ENCODE measurements at regions of chr12 and their contacts with region 1.

Region 1: DNA sequence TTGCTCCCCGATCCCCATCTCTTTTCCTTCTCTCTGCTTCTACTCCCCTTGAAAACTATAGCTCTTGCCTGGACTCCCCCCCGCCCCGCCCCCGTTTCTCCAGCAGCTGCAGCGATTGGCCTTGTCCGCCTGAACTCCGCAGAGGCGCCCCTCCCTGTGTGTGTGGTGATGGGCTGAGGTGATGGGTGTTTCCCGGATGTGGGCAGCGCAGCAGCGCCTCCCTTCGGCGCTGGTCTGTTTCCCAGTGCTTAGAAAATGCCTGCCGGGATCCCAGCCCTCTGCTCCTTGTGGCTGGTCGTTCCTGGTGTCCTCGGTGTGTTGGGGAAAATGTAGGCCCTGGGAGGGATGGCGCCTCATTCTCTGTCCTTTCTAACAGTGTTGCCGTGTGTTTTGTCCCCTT is 43.3 kb downstream of the GALNT8 start:
- DNase-seq: no peak
- ATAC-seq: no peak
- H3K4me3 ChIP-seq: no peak overlapping the region
- H3K27ac ChIP-seq: no peak overlapping the region
- H3K4me1 ChIP-seq: peaks cover 0 to 35% (median 5%) of the 10 kb centered on the region in 9 donors
- H3K27me3 ChIP-seq: no peaks in the 10 kb centered on the region
- CTCF ChIP-seq: no peak

Region 2: DNA sequence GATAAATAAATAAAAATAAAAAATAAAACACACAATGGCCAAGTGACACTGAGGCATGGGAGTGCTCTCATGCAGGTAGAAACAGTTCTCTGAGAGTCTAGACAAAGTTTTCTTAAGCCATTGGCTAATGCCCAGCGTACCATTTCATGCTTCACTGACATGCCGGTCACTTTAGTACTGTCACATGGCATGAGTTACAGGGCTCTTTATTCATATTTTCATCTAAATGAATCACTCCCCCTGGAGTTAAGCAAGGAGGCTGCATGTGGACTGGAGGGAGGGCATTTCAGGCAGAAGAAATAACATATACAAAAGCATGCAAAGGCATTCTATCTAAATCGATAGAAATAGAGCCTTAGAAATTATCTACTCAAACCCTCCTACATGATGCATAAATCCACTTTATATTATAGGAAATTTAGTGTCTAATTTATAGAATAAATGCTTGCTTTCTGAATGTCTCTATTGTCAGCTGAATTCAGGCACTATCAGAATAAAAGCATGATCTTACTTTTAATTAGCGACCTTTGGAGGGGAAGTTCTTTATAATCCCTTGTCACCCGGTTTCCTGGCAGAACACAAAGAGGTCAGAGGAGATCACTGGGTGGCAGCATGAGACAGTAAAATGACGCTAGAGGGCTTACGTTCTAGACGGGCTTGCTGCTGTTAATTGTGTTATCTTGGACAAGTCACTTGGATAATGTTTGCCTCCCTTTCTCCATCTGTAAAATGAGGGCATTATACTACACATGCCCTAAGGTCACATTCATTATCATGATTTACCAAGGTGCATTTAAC is 184.0 kb before region 1 on chr12:
- intact Hi-C with region 1: loop called in 4 of 10 experiments (anchors 5 to 10 kb)
- DNase-seq: no peak
- ATAC-seq: peak in 3 of 8 donors; percentile 53 to 58 (median 56)
- H3K4me3 ChIP-seq: no peak overlapping the region
- H3K27ac ChIP-seq: no peak overlapping the region
- H3K4me1 ChIP-seq: peaks cover 0 to 6% (median 0%) of the 10 kb centered on the region in 9 donors
- H3K27me3 ChIP-seq: peaks cover 0 to 24% (median 0%) of the 10 kb centered on the region in 7 donors
- CTCF ChIP-seq: peak in 6 of 9 donors; percentile 7 to 40 (median 29)

Region 3: GRCh38 chr12:4604684-4605193 is 158.8 kb before region 1 on chr12:
- intact Hi-C with region 1: loop called in 4 of 10 experiments (anchors 1 to 10 kb)
- DNase-seq: peak; percentile 72 to 82
- ATAC-seq: peak; percentile 89 to 98 (median 97)
- H3K4me3 ChIP-seq: peak overlapping the region; percentile 56 to 86 (median 76)
- H3K27ac ChIP-seq: peak overlapping the region in 9 of 10 donors; percentile 52 to 82 (median 72)
- H3K4me1 ChIP-seq: peaks cover 0 to 22% (median 11%) of the 10 kb centered on the region in 9 donors
- H3K27me3 ChIP-seq: no peaks in the 10 kb centered on the region
- CTCF ChIP-seq: peak; percentile 88 to 100 (median 97)

Measured in heart right ventricle (tissue), 16 donors.